ENCODE measurements at regions of chr19 and their contacts with region 1.

Region 1: DNA sequence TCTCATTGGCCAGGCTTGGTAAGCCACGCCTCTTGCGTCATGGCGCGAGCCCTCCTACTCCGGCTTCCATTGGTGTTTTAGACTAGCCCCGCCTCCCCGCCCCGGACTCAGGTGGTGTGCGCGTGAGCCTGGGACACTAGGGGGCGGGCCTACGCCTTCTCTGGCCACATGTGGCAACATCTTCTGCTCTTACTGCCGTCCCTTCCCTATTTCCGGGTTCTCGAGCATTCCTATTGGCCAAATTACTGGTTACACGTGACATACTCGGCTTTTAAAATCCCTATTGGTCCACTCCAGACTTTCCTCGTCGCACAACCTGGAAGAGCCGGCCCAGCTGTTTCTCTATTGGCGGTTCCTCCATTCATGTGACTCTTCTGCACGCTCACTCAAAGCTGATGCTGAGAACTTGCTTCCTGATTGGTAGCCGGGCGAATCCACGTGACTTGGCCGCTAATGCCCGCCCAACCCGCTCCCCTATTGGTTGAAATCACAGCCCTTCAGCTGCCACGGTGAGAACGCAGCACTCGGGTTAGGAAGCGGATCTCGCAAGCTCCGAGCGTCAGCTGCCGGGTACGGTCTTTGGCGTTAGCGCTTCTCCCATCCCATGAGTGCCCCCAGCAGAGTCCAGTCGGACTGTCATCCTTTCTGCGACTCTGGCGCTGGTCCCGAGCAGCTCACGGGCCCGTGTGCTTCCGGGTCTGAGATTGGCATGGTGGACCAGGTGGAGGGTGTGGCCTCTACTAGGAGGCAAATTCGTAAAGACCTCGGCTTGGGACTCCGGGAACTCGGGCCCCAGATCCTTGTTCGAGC is at the start of gene BLOC1S3:
- DNase-seq: peak; percentile 100
- ATAC-seq: peak; percentile 86
- H3K4me3 ChIP-seq: peak within 1 kb of the TSS; percentile 76 to 92 (median 87)
- H3K27ac ChIP-seq: peak within 1 kb of the TSS; percentile 79
- H3K4me1 ChIP-seq: peaks cover 46% of the 10 kb centered on the region
- H3K27me3 ChIP-seq: no peaks in the 10 kb centered on the region; a peak in 1 of 5 replicates
- CTCF ChIP-seq: peak; percentile 82
- EP300 ChIP-seq: peak in 1 of 2 experiments; percentile 8; a peak in 1 of 4 replicates
- POLR2A ChIP-seq: peak; percentile 77 to 81
- RAD21 ChIP-seq: no peak
- total RNA-seq, gene BLOC1S3: 3.2 and 4.3 TPM in 2 replicates

Region 2: GRCh38 chr19:45152504-45153338 is 25.7 kb before region 1 on chr19:
- CTCF ChIA-PET with region 1: no interaction called
- POLR2A ChIA-PET with region 1: interaction called, 23 read pairs
- in situ Hi-C with region 1: no loop called
- intact Hi-C with region 1: no loop called
- DNase-seq: no peak
- ATAC-seq: no peak
- H3K4me3 ChIP-seq: no peak overlapping the region
- H3K27ac ChIP-seq: no peak overlapping the region
- H3K4me1 ChIP-seq: peaks cover 61% of the 10 kb centered on the region
- H3K27me3 ChIP-seq: peaks cover 0 to 19% of the 10 kb centered on the region in 2 experiments; a peak in 3 of 5 replicates
- CTCF ChIP-seq: no peak
- EP300 ChIP-seq: no peak
- POLR2A ChIP-seq: no peak
- RAD21 ChIP-seq: no peak

Region 3: GRCh38 chr19:45164577-45165335 is 13.7 kb before region 1 on chr19:
- CTCF ChIA-PET with region 1: no interaction called
- POLR2A ChIA-PET with region 1: interaction called, 29 read pairs
- in situ Hi-C with region 1: no loop called
- intact Hi-C with region 1: no loop called
- DNase-seq: peak; percentile 79
- ATAC-seq: peak; percentile 57
- H3K4me3 ChIP-seq: peak overlapping the region; percentile 28 to 64 (median 36)
- H3K27ac ChIP-seq: no peak overlapping the region
- H3K4me1 ChIP-seq: peaks cover 96% of the 10 kb centered on the region
- H3K27me3 ChIP-seq: peaks cover 12 to 21% of the 10 kb centered on the region in 2 experiments; a peak in 4 of 5 replicates
- CTCF ChIP-seq: peak; percentile 38
- EP300 ChIP-seq: no peak
- POLR2A ChIP-seq: no peak
- RAD21 ChIP-seq: 0 out of 2 replicates have a peak, but pooled peaks have one; percentile 14

Measured in HepG2 (cell line).